Activated CD8-positive, alpha-beta T cell treated with anti-CD3 and anti-CD28 coated beads, Interleukin-2, amount 10 ng/mL, durations not matched to agents 7 days and 5 days (primary cell): ENCODE measurements at regions of chr17 and their contacts with region 1.

Region 1: DNA sequence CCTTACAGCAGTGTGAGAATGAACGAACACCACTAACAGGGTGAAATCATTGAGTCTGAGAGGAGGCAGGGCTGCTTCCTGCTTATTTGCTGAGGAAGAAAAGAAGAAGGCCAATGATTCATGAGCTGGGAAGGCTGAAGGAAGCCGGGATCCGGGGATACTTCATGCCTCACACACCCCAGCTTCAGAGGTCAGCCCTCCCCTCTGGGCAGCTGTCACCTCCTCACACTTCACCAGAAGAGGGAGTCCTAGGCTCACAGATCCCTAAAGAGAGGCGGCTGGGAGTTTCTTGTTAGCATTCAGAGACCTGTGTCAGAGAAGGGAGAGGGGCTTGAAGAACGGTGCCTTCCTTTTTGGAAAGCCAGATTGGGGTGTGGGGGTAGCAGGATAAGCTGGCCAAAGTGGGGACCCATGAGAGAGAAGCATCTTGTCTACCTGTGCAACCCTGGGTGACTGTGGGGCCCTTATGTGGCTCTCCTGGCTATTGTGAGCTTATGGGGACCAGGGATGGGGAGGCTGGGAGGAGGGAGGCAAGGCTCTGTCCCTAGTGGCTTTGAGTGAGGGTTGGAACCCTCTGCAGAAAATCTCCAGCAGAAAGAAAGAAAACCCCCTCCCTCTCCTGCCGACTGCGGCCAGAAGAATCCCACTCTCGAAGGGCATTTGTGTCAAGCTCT is 94.6 kb downstream of the RGS9 start:
- DNase-seq: peak; percentile 76
- ATAC-seq: peak; percentile 48
- H3K4me3 Mint-ChIP-seq: no peak overlapping the region
- H3K27ac Mint-ChIP-seq: no peak overlapping the region
- H3K4me1 Mint-ChIP-seq: peaks cover 46% of the 10 kb centered on the region
- H3K27me3 Mint-ChIP-seq: peaks cover 15% of the 10 kb centered on the region

Region 2: DNA sequence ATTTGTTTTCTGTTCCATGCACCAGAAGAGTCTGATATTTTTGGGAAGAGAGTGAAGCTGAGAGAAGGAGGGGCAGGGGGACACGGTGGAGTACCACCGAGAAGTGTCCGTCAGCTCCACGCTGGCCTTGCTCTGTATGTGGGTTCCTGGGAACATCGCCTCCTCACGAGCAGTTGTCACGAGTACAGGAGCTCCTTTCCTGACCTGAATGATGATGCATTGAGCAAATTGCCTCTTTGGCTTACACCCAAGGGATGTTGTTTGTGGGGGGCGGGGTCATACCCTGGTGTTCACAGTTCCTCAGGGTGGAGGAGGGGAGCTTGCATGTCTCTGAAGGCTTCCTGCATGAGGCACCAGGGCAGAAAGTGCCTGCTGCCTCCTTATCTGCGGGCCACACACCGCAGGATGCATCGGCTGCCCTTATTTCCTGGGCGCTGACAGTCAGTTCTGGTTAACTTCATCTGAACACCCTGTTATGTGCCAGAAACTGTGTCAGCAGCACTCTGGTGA is 58.5 kb before region 1 on chr17:
- CTCF ChIA-PET with region 1: no interaction called
- POLR2A ChIA-PET with region 1: no interaction called
- DNase-seq: peak; percentile 89
- ATAC-seq: peak; percentile 88
- H3K4me3 Mint-ChIP-seq: peak overlapping the region; percentile 51
- H3K27ac Mint-ChIP-seq: no peak overlapping the region
- H3K4me1 Mint-ChIP-seq: peaks cover 29% of the 10 kb centered on the region
- H3K27me3 Mint-ChIP-seq: no peaks in the 10 kb centered on the region

Region 3: GRCh38 chr17:65219124-65219523 is 12.7 kb before region 1 on chr17:
- CTCF ChIA-PET with region 1: interaction called, 11 read pairs
- POLR2A ChIA-PET with region 1: no interaction called
- DNase-seq: no peak
- ATAC-seq: no peak
- H3K4me3 Mint-ChIP-seq: no peak overlapping the region
- H3K27ac Mint-ChIP-seq: no peak overlapping the region
- H3K4me1 Mint-ChIP-seq: peaks cover 4% of the 10 kb centered on the region
- H3K27me3 Mint-ChIP-seq: peaks cover 24% of the 10 kb centered on the region

Region 4: GRCh38 chr17:65261682-65262636 is 30.2 kb after region 1 on chr17:
- CTCF ChIA-PET with region 1: interaction called, 39 read pairs
- POLR2A ChIA-PET with region 1: interaction called, 5 read pairs
- DNase-seq: no peak
- ATAC-seq: peak; percentile 64
- H3K4me3 Mint-ChIP-seq: peak overlapping the region; percentile 24
- H3K27ac Mint-ChIP-seq: peak overlapping the region; percentile 29
- H3K4me1 Mint-ChIP-seq: peaks cover 46% of the 10 kb centered on the region
- H3K27me3 Mint-ChIP-seq: peaks cover 15% of the 10 kb centered on the region

Region 5: GRCh38 chr17:66165513-66166123 is 933.8 kb after region 1 on chr17:
- CTCF ChIA-PET with region 1: interaction called, 32 read pairs
- POLR2A ChIA-PET with region 1: interaction called, 3 read pairs
- DNase-seq: peak; percentile 37
- ATAC-seq: no peak
- H3K4me3 Mint-ChIP-seq: no peak overlapping the region
- H3K27ac Mint-ChIP-seq: no peak overlapping the region
- H3K4me1 Mint-ChIP-seq: no peaks in the 10 kb centered on the region
- H3K27me3 Mint-ChIP-seq: peaks cover 4% of the 10 kb centered on the region